Activated CD4-positive, alpha-beta T cell treated with anti-CD3 and anti-CD28 coated beads, Interleukin-2, amount 10 ng/mL, durations not matched to agents 24 days and 14 days (primary cell): ENCODE measurements at regions of chr16 and their contacts with region 1.

Region 1: GRCh38 chr16:48164907-48165726 is 9.3 kb upstream of the ABCC12 start:
- DNase-seq: peak; percentile 90
- H3K4me3 Mint-ChIP-seq: no peak overlapping the region
- H3K27ac Mint-ChIP-seq: peak overlapping the region; percentile 64
- H3K4me1 Mint-ChIP-seq: peaks cover 15% of the 10 kb centered on the region
- H3K27me3 Mint-ChIP-seq: peaks cover 9% of the 10 kb centered on the region

Region 2: GRCh38 chr16:46555951-46556350 is 1609.2 kb before region 1 on chr16:
- intact Hi-C with region 1: loop called (anchors 10 kb)
- DNase-seq: no peak
- H3K4me3 Mint-ChIP-seq: no peak overlapping the region
- H3K27ac Mint-ChIP-seq: no peak overlapping the region
- H3K4me1 Mint-ChIP-seq: no peaks in the 10 kb centered on the region
- H3K27me3 Mint-ChIP-seq: peaks cover 9% of the 10 kb centered on the region

Region 3: GRCh38 chr16:46853713-46854443 is 1311.2 kb before region 1 on chr16:
- intact Hi-C with region 1: loop called (anchors 5 kb)
- DNase-seq: peak; percentile 90
- H3K4me3 Mint-ChIP-seq: no peak overlapping the region
- H3K27ac Mint-ChIP-seq: no peak overlapping the region
- H3K4me1 Mint-ChIP-seq: peaks cover 2% of the 10 kb centered on the region
- H3K27me3 Mint-ChIP-seq: peaks cover 3% of the 10 kb centered on the region

Region 4: GRCh38 chr16:46947900-46948547 is 1217.1 kb before region 1 on chr16:
- intact Hi-C with region 1: loop called (anchors 2 kb)
- DNase-seq: peak; percentile 82
- H3K4me3 Mint-ChIP-seq: no peak overlapping the region
- H3K27ac Mint-ChIP-seq: no peak overlapping the region
- H3K4me1 Mint-ChIP-seq: peaks cover 11% of the 10 kb centered on the region
- H3K27me3 Mint-ChIP-seq: no peaks in the 10 kb centered on the region

Region 5: GRCh38 chr16:47037746-47038458 is 1127.2 kb before region 1 on chr16:
- intact Hi-C with region 1: loop called (anchors 1 kb)
- DNase-seq: peak; percentile 97
- H3K4me3 Mint-ChIP-seq: peak overlapping the region; percentile 82
- H3K27ac Mint-ChIP-seq: no peak overlapping the region
- H3K4me1 Mint-ChIP-seq: peaks cover 4% of the 10 kb centered on the region
- H3K27me3 Mint-ChIP-seq: peaks cover 14% of the 10 kb centered on the region

Region 6: GRCh38 chr16:48632137-48632774 is 467.1 kb after region 1 on chr16:
- intact Hi-C with region 1: loop called (anchors 1 kb)
- DNase-seq: peak; percentile 48
- H3K4me3 Mint-ChIP-seq: no peak overlapping the region
- H3K27ac Mint-ChIP-seq: no peak overlapping the region
- H3K4me1 Mint-ChIP-seq: peaks cover 7% of the 10 kb centered on the region
- H3K27me3 Mint-ChIP-seq: peaks cover 2% of the 10 kb centered on the region